Ovary (tissue), 10 donors: ENCODE measurements at regions of chr10 and their contacts with region 1.

Region 1: DNA sequence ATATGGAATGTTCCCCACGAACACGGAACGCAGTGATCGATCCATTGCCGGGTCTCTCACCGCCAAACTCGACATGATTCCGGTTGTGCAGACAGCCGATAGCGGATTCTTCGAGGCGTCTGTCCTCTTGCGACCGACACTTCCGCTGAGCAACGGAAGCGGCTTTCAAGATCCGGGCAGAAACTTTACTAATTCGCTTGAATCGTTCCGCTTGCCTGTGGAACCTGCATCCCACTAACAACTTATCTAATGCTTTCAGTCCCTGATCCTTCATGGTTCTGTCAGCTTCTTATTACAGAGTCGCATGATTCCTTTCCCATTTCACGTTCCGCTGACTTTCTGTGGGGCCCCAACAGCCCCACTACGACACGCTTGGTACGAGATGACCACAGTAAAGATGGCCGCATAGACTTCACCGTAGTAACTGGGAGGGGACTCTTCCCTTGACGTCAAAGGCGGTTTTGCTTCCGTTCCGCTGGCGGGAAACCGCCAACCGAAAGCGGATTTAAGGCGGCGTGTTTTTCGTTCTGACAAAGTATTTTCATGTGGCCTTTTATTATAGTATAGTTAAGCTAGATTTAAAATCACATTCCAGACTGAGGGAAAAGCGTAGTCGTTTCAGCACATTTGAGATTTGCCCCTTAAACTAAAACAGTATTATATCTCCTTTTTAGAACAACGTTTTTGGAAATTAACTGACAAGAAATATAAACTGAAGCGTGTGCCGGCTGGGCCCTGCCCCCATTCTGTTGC is at the start of gene CSTF2T:
- DNase-seq: peak; percentile 90 to 92 (median 90)
- H3K4me3 ChIP-seq: peak within 1 kb of the TSS; percentile 86
- H3K27ac ChIP-seq: peak within 1 kb of the TSS; percentile 91 to 93
- H3K4me1 ChIP-seq: peaks cover 11% of the 10 kb centered on the region
- H3K27me3 ChIP-seq: no peaks in the 10 kb centered on the region
- CTCF ChIP-seq: no peak
- EP300 ChIP-seq: peak; percentile 63
- POLR2A ChIP-seq: peak; percentile 71
- total RNA-seq, gene CSTF2T: 18.0 to 38.2 (median 30.7) TPM

Region 2: DNA sequence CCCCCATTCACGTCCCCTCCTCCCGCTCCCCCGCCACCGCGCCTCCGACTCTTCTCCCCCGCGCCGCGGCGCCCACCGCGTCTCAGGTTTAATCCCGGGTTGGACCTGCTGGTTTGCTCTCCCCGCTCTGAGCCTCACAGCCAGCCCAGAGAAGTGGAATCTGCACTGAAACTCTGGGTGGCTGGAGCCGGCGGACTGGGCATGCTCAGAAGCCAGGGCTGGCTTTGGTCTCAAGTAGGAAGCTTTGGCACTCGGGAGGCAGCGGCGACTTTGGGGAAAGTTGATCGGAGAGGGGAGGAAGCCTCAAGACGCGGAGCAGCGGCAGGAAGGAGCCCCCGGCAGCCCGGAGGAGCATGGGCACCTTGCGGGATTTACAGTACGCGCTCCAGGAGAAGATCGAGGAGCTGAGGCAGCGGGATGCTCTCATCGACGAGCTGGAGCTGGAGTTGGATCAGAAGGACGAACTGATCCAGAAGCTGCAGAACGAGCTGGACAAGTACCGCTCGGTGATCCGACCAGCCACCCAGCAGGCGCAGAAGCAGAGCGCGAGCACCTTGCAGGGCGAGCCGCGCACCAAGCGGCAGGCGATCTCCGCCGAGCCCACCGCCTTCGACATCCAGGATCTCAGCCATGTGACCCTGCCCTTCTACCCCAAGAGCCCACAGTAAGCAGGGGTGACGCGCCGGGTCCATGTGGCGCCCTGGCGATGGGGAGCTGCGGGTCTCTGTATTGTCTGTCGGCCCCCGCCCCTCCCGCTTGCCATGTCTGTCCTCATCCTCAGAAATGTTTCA is 625.2 kb before region 1 on chr10 and contains the start of gene PRKG1:
- intact Hi-C with region 1: loop called in 1 of 4 experiments (anchors 5 kb)
- DNase-seq: peak; percentile 66 to 75 (median 68)
- H3K4me3 ChIP-seq: peak within 1 kb of the TSS; percentile 84
- H3K27ac ChIP-seq: peak within 1 kb of the TSS; percentile 68 to 73
- H3K4me1 ChIP-seq: peaks cover 1% of the 10 kb centered on the region
- H3K27me3 ChIP-seq: no peaks in the 10 kb centered on the region
- CTCF ChIP-seq: no peak
- EP300 ChIP-seq: no peak
- POLR2A ChIP-seq: peak; percentile 31
- total RNA-seq, gene PRKG1: 8.4 to 21.1 (median 16.6) TPM

Region 3: DNA sequence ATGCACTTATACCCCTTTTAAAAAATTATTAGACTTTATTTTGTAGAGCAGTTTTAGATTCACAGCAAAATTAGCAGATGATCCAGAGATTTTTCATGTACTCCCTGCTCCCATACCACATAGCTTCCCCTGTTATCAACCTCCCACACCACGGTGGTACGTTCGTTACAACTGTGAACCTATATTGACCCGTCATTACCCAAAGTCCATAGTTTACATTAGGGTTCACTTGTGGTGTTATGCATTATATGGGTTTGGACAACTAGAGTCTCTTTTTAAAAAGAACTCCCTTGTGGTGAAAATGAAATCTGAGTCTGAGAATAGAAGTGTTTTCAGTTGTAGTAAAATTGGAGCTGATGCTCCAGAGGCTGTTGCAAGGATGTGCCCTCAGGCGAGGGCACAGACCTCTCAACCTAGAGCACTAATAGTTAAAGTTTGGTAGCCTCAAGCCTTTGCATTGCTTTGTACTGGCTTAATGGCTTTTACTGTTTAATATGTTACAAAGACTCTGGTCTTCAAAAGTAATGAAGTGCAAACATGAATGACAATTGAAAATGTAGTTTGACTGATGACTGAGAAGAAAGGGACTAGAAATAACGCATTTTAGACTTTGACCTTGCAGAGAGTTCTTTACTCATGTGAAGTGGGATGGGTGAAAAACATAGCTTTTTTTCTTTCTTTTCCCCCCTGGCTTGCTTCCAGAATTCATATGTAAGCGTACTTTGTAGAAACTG is 30.3 kb after region 1 on chr10:
- intact Hi-C with region 1: no loop called
- DNase-seq: no peak
- H3K4me3 ChIP-seq: no peak overlapping the region
- H3K27ac ChIP-seq: no peak overlapping the region
- H3K4me1 ChIP-seq: no peaks in the 10 kb centered on the region
- H3K27me3 ChIP-seq: no peaks in the 10 kb centered on the region
- CTCF ChIP-seq: no peak
- EP300 ChIP-seq: no peak
- POLR2A ChIP-seq: no peak

Region 4: GRCh38 chr10:51879238-51879637 is 179.6 kb after region 1 on chr10:
- intact Hi-C with region 1: loop called in 1 of 4 experiments (anchors 10 kb)
- DNase-seq: peak in 1 of 5 donors; percentile 30
- H3K4me3 ChIP-seq: no peak overlapping the region
- H3K27ac ChIP-seq: peak overlapping the region in 1 of 2 donors; percentile 22
- H3K4me1 ChIP-seq: no peaks in the 10 kb centered on the region
- H3K27me3 ChIP-seq: no peaks in the 10 kb centered on the region
- CTCF ChIP-seq: no peak
- EP300 ChIP-seq: no peak
- POLR2A ChIP-seq: no peak

Region 5: DNA sequence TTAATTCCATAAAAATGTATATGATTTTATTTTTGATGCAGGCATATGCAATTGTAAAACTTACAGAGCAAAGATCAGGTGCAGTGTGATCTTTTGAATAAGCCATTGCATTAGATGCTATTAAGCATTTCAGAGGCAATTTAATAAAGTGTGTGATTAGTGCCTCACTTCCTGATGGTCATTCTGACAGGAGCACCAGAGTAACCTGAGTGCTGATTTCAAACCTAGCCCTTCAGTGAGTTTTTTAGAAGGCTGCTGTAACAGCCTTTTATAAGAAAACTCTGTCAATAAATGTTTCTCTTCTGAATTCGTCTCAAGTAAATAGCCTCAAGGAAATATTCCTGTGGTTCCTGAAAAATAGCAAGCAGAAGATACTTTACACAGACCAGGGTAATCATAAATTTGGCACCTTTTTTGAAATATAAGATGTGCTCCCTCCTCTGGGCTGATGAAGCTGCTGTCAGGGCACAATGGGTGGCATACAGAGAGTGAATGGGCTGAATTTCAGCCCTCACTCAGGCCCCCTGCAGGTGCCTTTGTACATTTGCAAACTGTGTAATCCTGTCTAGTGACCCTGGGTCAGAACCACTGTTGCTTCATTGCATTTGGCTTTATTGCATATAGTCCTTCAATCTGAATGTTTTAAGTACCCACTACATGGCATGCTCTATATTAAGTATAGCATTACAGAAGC is 193.5 kb after region 1 on chr10:
- intact Hi-C with region 1: loop called in 2 of 4 experiments (anchors 10 kb)
- DNase-seq: peak in 1 of 5 donors; percentile 29
- H3K4me3 ChIP-seq: no peak overlapping the region
- H3K27ac ChIP-seq: no peak overlapping the region
- H3K4me1 ChIP-seq: peaks cover 6% of the 10 kb centered on the region
- H3K27me3 ChIP-seq: no peaks in the 10 kb centered on the region
- CTCF ChIP-seq: peak in 1 of 3 donors; percentile 14
- EP300 ChIP-seq: no peak
- POLR2A ChIP-seq: no peak

Region 6: GRCh38 chr10:52027055-52027705 is 327.5 kb after region 1 on chr10:
- intact Hi-C with region 1: no loop called
- DNase-seq: no peak
- H3K4me3 ChIP-seq: no peak overlapping the region
- H3K27ac ChIP-seq: no peak overlapping the region
- H3K4me1 ChIP-seq: no peaks in the 10 kb centered on the region
- H3K27me3 ChIP-seq: no peaks in the 10 kb centered on the region
- CTCF ChIP-seq: no peak
- EP300 ChIP-seq: no peak
- POLR2A ChIP-seq: no peak